WTC11 (cell line): ENCODE measurements at regions of chr20 and their contacts with region 1.

Region 1: DNA sequence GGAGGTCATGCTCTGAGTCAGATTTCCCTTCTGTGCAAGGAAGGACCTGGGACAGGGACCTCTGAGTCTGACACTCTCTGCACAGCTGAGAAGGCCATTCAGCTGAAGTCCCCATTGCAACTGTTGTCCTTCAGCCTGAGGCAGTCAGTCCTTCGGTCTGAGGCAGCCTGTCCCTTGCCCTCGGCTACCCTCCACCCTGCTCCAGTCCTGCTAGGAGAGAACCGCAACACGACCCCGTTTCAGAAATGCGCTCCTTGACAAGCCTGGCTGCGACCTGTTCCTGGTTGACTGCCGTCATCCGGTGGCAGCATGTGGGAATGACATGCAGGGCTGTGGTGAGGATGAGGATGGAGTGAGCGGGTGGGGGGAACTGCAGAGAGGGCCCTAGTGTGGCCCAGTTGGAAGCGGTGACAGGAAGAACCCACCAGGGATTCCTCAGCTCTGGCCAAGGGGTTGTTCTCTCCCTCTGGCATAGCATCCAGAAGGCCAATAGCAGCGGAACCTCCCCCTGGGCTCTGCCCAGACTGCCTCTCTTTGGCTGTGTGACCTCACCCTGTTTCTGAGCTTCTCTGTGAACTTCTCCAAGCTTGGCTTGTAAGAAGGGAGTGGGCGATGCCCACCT is 40.3 kb upstream of the ANGPT4 start:
- DNase-seq: peak; percentile 88
- ATAC-seq: peak; percentile 88
- H3K4me3 Mint-ChIP-seq: no peak overlapping the region
- H3K27ac Mint-ChIP-seq: no peak overlapping the region
- H3K4me1 Mint-ChIP-seq: peaks cover 2% of the 10 kb centered on the region; the same call in 1 of the 2 replicates
- H3K27me3 Mint-ChIP-seq: peaks cover 5% of the 10 kb centered on the region
- CTCF ChIP-seq: peak; percentile 96

Region 2: DNA sequence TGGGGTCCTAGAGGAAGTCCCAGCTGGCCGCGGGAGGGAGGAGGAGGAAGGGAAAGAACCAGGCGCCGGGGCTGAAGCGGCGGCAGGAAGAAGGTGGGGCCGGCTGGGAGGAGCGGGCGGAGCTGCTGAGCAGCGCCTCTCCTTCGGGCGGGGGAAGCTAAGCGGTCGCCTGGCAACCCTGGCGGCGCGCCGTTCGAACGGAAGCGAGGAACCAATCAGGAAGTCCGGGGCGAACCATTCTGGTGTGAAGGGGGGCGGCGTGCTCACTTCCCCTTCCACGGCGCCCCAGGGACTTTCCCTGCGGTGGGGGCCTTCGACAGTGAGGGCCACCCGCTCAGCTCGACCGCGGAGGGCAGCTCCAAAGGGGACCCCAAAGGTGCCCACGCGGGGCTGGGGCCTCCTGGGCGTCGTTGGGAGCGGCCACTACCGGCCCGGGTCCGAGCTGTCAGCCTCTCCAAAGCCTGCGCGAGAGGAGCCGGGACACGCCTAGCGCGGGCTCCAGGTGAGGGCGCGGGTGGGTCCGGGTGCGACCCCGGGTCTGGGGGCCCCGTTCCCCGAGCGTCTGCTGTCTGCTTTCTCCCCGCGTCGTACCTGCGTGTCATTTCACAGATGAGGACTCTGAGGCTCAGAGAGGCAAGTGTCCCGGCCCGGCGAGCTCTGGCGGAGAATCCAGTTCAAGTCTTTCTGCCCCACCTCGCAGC is 122.8 kb before region 1 on chr20 and contains the start of gene FAM110A:
- CTCF ChIA-PET with region 1: interaction called, 14 read pairs
- POLR2A ChIA-PET with region 1: no interaction called
- DNase-seq: peak; percentile 96
- ATAC-seq: peak; percentile 97
- H3K4me3 Mint-ChIP-seq: peak within 1 kb of the TSS; percentile 76
- H3K27ac Mint-ChIP-seq: no peak within 1 kb of the TSS
- H3K4me1 Mint-ChIP-seq: peaks cover 12% of the 10 kb centered on the region
- H3K27me3 Mint-ChIP-seq: peaks cover 20% of the 10 kb centered on the region
- CTCF ChIP-seq: no peak
- total RNA-seq, gene FAM110A: 17.2 to 18.8 TPM (median 18.0 TPM) in 3 replicates